ENCODE measurements at regions of chr17 and their contacts with region 1.

Region 1: DNA sequence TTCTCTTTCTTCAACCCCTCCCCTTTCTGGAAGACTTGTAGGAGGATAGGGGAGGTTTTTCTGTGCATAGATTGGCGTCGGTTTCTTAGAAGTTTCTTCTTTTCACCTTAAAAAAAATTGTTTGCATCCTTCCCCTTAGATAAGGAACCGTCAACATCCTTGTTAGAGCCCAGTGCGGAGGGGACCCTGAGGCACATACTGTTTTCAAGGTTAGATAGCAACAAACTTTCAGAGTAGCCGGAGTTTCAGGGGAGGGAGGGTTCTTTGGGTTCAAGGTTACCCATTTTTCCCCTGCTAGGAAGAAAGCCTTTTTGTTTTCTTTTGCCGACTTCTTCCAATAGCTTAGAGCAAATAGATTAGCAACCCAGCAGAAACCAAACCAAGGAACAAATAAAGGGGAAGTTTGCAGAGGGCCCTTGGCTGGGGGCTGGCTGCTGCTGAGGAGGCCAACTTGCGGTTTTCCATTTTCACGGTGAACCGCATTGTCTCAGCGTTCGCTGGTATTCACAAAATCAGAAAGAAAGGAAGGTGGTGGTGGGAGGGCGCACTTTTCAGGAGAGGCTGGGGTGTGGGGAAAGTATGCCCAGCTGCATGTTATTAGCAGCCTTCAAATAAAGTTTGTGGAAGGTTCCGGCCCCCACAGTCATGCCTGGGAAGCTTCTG is 28.8 kb downstream of the MSI2 start:
- DNase-seq: peak; percentile 58
- H3K4me3 Mint-ChIP-seq: peak overlapping the region; percentile 68
- H3K27ac Mint-ChIP-seq: peak overlapping the region; percentile 88
- H3K4me1 Mint-ChIP-seq: peaks cover 76% of the 10 kb centered on the region
- H3K27me3 Mint-ChIP-seq: no peaks in the 10 kb centered on the region

Region 2: DNA sequence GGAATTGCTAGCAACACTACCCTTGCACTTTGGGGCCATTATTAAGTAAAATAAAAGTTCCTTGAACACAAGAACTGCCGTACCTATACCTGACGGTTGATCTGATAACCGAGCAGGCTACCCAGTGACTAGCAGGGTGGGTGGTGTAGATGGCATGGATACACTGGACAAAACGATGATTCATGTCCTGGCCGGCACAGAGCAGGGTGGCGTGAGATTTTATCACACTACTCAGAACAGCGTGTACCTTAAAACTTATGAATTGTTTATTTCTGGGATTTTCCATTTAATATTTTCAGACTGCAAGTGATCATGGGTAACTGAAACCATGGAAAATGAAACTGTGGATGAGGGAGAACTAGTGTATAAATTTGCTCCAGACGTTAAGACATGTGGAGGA is 69.8 kb before region 1 on chr17:
- intact Hi-C with region 1: no loop called
- DNase-seq: no peak
- H3K4me3 Mint-ChIP-seq: no peak overlapping the region
- H3K27ac Mint-ChIP-seq: no peak overlapping the region
- H3K4me1 Mint-ChIP-seq: no peaks in the 10 kb centered on the region
- H3K27me3 Mint-ChIP-seq: peaks cover 17% of the 10 kb centered on the region

Region 3: DNA sequence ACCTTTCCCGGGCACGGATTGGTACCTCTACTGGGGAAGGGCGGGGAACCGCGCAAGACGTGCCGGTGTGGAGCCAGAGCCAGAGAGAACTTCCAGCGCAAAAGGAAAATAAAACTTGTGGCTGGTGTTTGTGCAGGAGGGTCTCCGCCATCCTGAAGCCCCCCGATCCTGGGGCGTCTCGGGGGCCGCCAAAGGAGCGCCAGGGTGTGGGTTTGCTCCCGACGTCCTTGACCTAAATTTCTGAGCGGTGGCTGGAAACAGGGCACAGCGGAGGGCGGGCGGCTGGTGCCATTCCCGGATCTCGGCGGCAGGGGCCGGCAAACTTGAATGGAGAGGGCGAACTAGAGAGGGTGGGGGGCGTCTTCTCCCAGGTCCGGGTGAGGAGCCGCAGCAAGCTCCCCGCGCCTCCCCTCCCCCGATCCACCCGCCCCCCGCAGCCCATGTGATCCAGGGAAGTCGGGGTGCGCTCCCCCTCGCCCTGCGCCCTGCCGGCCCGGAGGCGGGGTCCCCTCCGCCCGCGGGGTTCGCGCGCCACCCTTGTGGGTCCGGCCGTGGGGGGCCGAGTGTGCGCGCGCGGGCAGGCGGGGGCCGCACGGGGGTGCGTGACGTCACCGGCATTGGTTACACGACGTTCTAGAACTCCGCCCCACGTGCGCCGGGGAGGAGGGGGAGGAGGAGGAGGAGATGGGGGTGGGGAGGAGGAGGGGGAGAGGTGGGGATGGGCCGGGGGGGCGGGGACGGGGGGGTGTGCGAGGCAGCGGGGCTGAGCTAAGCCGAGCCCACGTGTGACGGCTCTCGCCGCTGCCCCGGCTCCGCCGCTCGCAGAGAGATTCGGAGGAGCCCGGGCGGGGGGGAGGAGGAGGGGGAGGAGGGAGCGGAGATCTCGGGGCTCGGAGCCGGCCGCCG is 29.1 kb before region 1 on chr17 and contains the start of gene MSI2:
- intact Hi-C with region 1: loop called (anchors 1 kb)
- DNase-seq: peak; percentile 82
- H3K4me3 Mint-ChIP-seq: peak within 1 kb of the TSS; percentile 97
- H3K27ac Mint-ChIP-seq: peak within 1 kb of the TSS; percentile 88
- H3K4me1 Mint-ChIP-seq: peaks cover 41% of the 10 kb centered on the region
- H3K27me3 Mint-ChIP-seq: peaks cover 2% of the 10 kb centered on the region
- total RNA-seq, gene MSI2: 181 and 198 TPM in 2 replicates

Region 4: DNA sequence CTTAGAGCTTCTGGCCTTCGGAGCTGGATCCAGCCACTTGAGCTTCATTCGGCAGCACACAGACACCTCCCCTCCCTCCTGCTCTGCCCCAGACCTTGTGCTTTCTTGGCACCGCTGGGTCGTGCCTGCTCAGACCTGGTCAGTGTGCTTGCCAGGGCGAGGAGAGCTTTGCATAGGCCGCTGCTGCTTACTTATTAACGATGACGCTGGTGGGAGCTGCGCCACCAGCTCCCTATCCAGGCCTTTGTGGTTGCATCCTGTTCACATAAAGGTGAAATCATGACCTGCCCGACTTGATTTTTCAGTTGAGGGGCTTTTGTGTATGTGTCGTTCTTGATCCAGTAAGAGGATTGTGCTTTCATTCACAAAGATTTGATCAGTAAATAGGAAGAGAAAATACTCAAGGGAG is 72.3 kb after region 1 on chr17:
- intact Hi-C with region 1: loop called (anchors 5 kb)
- DNase-seq: no peak
- H3K4me3 Mint-ChIP-seq: peak overlapping the region; percentile 32
- H3K27ac Mint-ChIP-seq: peak overlapping the region; percentile 68
- H3K4me1 Mint-ChIP-seq: peaks cover 50% of the 10 kb centered on the region
- H3K27me3 Mint-ChIP-seq: no peaks in the 10 kb centered on the region

Measured in activated T-helper 2 cell treated with anti-CD3 and anti-CD28 coated beads, Interferon-gamma antibody, Interleukin-2, Interleukin-4, amounts not matched to agents 10 μg/mL and 5 μg/mL and 100 μg/mL, durations not matched to agents 14 hours and 24 hours and 36 hours (primary cell).